PC-3 (cell line): ENCODE measurements at regions of chr13 and their contacts with region 1.

Region 1: GRCh38 chr13:60933638-60934037 is 482.0 kb downstream of the PCDH20 start:
- DNase-seq: peak; percentile 45
- ATAC-seq: peak; percentile 24
- H3K4me3 ChIP-seq: peak overlapping the region; percentile 3; the same call in 1 of the 2 replicates
- H3K27ac ChIP-seq: peak overlapping the region; percentile 82; the same call in 1 of the 2 replicates
- H3K4me1 ChIP-seq: peaks cover 46% of the 10 kb centered on the region
- H3K27me3 ChIP-seq: no peaks in the 10 kb centered on the region
- CTCF ChIP-seq: no peak

Region 2: GRCh38 chr13:60788156-60788829 is 145.3 kb before region 1 on chr13:
- CTCF ChIA-PET with region 1: no interaction called
- POLR2A ChIA-PET with region 1: no interaction called
- intact Hi-C with region 1: loop called (anchors 10 kb)
- DNase-seq: peak; percentile 65
- ATAC-seq: peak; percentile 84
- H3K4me3 ChIP-seq: no peak overlapping the region
- H3K27ac ChIP-seq: 0 out of 2 replicates have a peak overlapping the region, but pooled peaks have one; percentile 3
- H3K4me1 ChIP-seq: peaks cover 9% of the 10 kb centered on the region; the same call in 1 of the 2 replicates
- H3K27me3 ChIP-seq: no peaks in the 10 kb centered on the region
- CTCF ChIP-seq: no peak

Region 3: GRCh38 chr13:60869941-60870613 is 63.6 kb before region 1 on chr13:
- CTCF ChIA-PET with region 1: no interaction called
- POLR2A ChIA-PET with region 1: no interaction called
- intact Hi-C with region 1: loop called (anchors 2 kb)
- DNase-seq: no peak
- ATAC-seq: no peak
- H3K4me3 ChIP-seq: no peak overlapping the region
- H3K27ac ChIP-seq: no peak overlapping the region
- H3K4me1 ChIP-seq: peaks cover 16% of the 10 kb centered on the region
- H3K27me3 ChIP-seq: no peaks in the 10 kb centered on the region
- CTCF ChIP-seq: no peak

Region 4: GRCh38 chr13:60957816-60958215 is 24.2 kb after region 1 on chr13:
- CTCF ChIA-PET with region 1: no interaction called
- POLR2A ChIA-PET with region 1: no interaction called
- intact Hi-C with region 1: loop called (anchors 2 kb)
- DNase-seq: no peak
- ATAC-seq: no peak
- H3K4me3 ChIP-seq: no peak overlapping the region
- H3K27ac ChIP-seq: no peak overlapping the region
- H3K4me1 ChIP-seq: peaks cover 12% of the 10 kb centered on the region; the same call in 1 of the 2 replicates
- H3K27me3 ChIP-seq: no peaks in the 10 kb centered on the region
- CTCF ChIP-seq: 0 out of 2 replicates have a peak, but pooled peaks have one; percentile 11

Region 5: GRCh38 chr13:60990032-60990733 is 56.5 kb after region 1 on chr13:
- CTCF ChIA-PET with region 1: no interaction called
- POLR2A ChIA-PET with region 1: interaction called, 10 read pairs
- intact Hi-C with region 1: no loop called
- DNase-seq: peak; percentile 56
- ATAC-seq: no peak
- H3K4me3 ChIP-seq: no peak overlapping the region
- H3K27ac ChIP-seq: no peak overlapping the region
- H3K4me1 ChIP-seq: no peaks in the 10 kb centered on the region
- H3K27me3 ChIP-seq: no peaks in the 10 kb centered on the region
- CTCF ChIP-seq: peak; percentile 62; the same call in 1 of the 2 replicates

Region 6: GRCh38 chr13:61084988-61085387 is 151.3 kb after region 1 on chr13:
- CTCF ChIA-PET with region 1: no interaction called
- POLR2A ChIA-PET with region 1: no interaction called
- intact Hi-C with region 1: loop called (anchors 5 kb)
- DNase-seq: peak; percentile 71
- ATAC-seq: peak; percentile 80
- H3K4me3 ChIP-seq: no peak overlapping the region
- H3K27ac ChIP-seq: peak overlapping the region; percentile 27
- H3K4me1 ChIP-seq: peaks cover 12% of the 10 kb centered on the region
- H3K27me3 ChIP-seq: no peaks in the 10 kb centered on the region
- CTCF ChIP-seq: no peak

Region 7: DNA sequence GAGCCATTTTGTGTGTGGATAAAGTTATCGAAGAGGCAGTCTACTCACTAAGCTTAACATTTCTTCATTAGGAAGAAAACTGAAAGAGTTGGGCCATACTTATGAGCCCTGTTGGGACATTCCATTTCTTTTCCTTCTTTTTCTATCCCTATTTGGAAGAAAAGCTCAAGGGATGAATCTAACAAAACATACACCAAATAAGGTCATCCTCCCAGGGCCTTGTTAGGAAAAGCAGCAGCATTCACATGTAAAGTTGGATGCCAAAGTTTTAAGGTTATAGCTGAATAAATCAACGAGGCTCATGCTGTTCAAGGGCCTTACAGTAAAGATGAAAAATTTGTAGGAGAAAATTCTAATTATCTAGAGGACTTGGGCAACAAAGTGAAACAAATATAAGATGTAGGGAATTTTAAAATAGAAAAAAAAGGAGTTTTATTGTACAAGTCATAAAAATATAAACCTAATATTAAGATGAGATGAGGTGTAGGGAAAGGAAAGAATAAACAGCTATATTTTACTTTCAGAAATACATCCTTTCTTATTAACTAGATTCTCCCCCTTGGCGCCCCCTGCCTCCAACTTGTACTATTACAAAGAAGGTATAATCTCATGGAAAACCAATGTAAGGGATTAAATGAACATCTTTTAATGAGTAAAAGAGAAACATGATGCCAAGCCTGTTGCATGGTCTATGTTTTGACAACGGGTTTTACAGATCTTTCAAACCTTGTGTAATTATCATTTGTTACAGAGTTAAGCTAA is 321.6 kb after region 1 on chr13:
- CTCF ChIA-PET with region 1: no interaction called
- POLR2A ChIA-PET with region 1: no interaction called
- intact Hi-C with region 1: loop called (anchors 10 kb)
- DNase-seq: peak; percentile 40
- ATAC-seq: no peak
- H3K4me3 ChIP-seq: no peak overlapping the region
- H3K27ac ChIP-seq: no peak overlapping the region
- H3K4me1 ChIP-seq: no peaks in the 10 kb centered on the region
- H3K27me3 ChIP-seq: no peaks in the 10 kb centered on the region
- CTCF ChIP-seq: peak; percentile 47

Region 8: DNA sequence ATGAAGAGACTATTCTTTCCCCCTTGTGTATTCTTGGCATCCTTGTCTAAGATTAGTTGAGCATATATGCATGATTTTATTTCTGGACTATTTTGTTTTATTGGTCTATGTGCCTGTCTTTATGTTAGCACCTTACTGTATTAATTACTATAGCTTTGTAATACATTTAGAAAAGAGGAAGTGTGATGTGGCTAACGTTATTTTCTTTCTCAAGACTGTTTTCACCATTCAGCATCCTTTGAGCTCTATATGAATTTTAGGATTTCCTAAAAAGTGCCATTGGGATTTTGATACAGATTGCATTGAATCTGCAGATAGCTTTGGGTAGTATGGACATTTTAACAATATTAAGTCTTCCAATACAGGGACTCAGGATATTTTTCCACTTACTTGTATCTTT is 519.5 kb after region 1 on chr13:
- CTCF ChIA-PET with region 1: no interaction called
- POLR2A ChIA-PET with region 1: no interaction called
- intact Hi-C with region 1: no loop called
- DNase-seq: no peak
- ATAC-seq: no peak
- H3K4me3 ChIP-seq: no peak overlapping the region
- H3K27ac ChIP-seq: no peak overlapping the region
- H3K4me1 ChIP-seq: no peaks in the 10 kb centered on the region
- H3K27me3 ChIP-seq: no peaks in the 10 kb centered on the region
- CTCF ChIP-seq: no peak